CD14-positive monocyte (primary cell): ENCODE measurements at regions of chr17 and their contacts with region 1.

Region 1: GRCh38 chr17:70144260-70144846 is 25.0 kb upstream of the KCNJ2 start:
- DNase-seq: peak; percentile 18 to 43 (median 37)
- H3K4me3 ChIP-seq: no peak overlapping the region
- H3K4me3 Mint-ChIP-seq: no peak overlapping the region
- H3K27ac ChIP-seq: no peak overlapping the region
- H3K27ac Mint-ChIP-seq: no peak overlapping the region
- H3K4me1 ChIP-seq: no peaks in the 10 kb centered on the region
- H3K4me1 Mint-ChIP-seq: no peaks in the 10 kb centered on the region
- H3K27me3 ChIP-seq: no peaks in the 10 kb centered on the region
- H3K27me3 Mint-ChIP-seq: peaks cover 0 to 3% (median under 1%) of the 10 kb centered on the region in 3 donors
- CTCF ChIP-seq: peak; percentile 88

Region 2: GRCh38 chr17:69567130-69567529 is 577.2 kb before region 1 on chr17:
- intact Hi-C with region 1: loop called (anchors 10 kb)
- DNase-seq: no peak
- H3K4me3 ChIP-seq: no peak overlapping the region
- H3K4me3 Mint-ChIP-seq: no peak overlapping the region
- H3K27ac ChIP-seq: no peak overlapping the region
- H3K27ac Mint-ChIP-seq: peak overlapping the region in 1 of 7 donors; percentile 77
- H3K4me1 ChIP-seq: peaks cover 0 to 5% of the 10 kb centered on the region in 2 donors
- H3K4me1 Mint-ChIP-seq: peaks cover 8% of the 10 kb centered on the region
- H3K27me3 ChIP-seq: no peaks in the 10 kb centered on the region
- H3K27me3 Mint-ChIP-seq: peaks cover 2 to 12% (median 8%) of the 10 kb centered on the region in 3 donors
- CTCF ChIP-seq: no peak